Activated CD4-positive, alpha-beta T cell treated with anti-CD3 and anti-CD28 coated beads, Interleukin-2, amount 10 ng/mL, durations not matched to agents 7 days and 5 days (primary cell): ENCODE measurements at regions of chr1 and their contacts with region 1.

Region 1: GRCh38 chr1:235876402-235877097 is 9.8 kb upstream of the LYST start:
- DNase-seq: no peak
- H3K4me3 Mint-ChIP-seq: peak overlapping the region; percentile 23
- H3K27ac Mint-ChIP-seq: peak overlapping the region; percentile 83
- H3K4me1 Mint-ChIP-seq: peaks cover 66% of the 10 kb centered on the region
- H3K27me3 Mint-ChIP-seq: no peaks in the 10 kb centered on the region

Region 2: DNA sequence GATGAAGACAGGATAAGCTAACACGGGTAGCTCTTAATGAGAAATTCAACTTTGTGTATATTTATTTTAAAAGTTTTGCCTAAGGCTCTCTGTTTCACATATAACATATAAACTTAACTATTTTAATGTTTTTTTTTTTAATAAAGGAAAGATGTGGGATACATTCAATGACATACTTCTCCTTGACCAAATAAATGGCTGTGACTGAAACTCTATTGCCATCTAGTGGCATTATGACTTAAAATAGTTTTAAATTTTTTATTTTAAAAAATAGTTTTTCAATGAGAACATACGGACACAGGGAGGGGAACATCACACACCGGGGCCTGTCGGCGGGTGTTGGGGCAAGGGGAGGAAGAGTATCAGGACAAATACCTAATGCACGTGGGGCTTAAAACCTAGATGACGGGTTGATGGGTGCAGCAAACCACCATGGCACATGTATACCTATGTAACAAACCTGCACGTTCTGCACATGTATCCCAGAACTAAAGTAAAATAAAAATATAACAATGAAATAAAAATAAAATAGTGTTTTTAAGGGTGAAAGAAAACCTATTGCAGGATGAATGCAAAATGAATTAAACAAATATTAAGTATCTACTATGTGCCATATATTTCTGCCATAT is 93.3 kb before region 1 on chr1:
- CTCF ChIA-PET with region 1: no interaction called
- POLR2A ChIA-PET with region 1: no interaction called
- DNase-seq: no peak
- H3K4me3 Mint-ChIP-seq: no peak overlapping the region
- H3K27ac Mint-ChIP-seq: no peak overlapping the region
- H3K4me1 Mint-ChIP-seq: no peaks in the 10 kb centered on the region
- H3K27me3 Mint-ChIP-seq: no peaks in the 10 kb centered on the region

Region 3: DNA sequence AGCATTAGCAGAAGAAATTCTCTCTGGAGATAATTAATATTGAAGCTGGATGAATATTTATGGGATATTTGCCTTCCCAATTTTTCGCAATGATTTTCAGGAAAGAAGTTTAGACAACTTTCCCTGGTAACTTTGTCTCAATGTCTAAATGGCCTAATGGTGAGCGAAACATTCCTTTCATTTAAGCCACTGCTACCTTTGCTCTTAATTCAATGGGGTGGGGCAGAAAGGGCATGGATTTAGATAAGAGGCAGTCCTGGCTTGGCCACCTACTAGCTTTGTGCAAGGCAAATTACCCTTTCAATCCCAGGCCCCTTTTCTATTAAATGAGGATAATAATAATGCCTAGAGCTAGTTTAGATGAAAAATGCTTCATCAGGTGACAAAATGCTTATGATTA is 17.3 kb after region 1 on chr1:
- CTCF ChIA-PET with region 1: no interaction called
- POLR2A ChIA-PET with region 1: no interaction called
- DNase-seq: no peak
- H3K4me3 Mint-ChIP-seq: no peak overlapping the region
- H3K27ac Mint-ChIP-seq: no peak overlapping the region
- H3K4me1 Mint-ChIP-seq: peaks cover 10% of the 10 kb centered on the region
- H3K27me3 Mint-ChIP-seq: no peaks in the 10 kb centered on the region

Region 4: DNA sequence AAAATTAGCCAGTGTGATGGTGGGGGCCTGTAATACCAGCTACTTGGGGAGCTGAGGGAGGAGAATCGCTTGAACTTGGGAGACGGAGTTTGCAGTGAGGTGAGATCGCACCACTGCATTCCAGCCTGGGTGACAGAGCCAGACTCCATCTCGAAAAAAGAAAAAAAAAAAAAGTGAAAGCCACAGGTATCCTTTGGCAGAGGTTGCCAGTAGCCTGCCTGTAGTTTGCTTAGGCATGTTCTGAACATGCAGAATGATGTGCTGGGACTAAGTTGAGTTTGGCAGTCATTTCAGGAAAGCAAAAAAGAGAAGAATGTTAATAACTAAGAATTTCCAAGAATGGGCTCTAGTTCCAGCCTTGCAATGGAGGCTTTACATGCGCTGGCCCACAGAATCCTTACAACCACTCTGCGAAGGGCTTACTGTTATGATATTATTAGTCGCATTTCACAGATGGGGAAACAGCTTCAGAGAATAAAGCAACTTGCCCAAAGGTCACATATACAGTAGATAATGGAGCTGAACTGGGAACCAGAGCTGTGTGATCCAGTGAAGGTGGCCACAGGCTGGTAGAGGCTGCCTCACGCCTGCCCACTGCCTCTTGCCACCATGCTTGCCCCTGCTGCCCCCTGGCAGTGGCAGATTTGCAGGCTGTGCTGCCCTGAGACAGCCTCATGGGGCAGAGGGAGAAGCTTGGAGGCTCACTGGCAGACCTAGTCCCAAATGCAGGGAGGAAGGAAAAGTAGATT is 56.6 kb after region 1 on chr1:
- CTCF ChIA-PET with region 1: no interaction called
- POLR2A ChIA-PET with region 1: no interaction called
- DNase-seq: no peak
- H3K4me3 Mint-ChIP-seq: no peak overlapping the region
- H3K27ac Mint-ChIP-seq: no peak overlapping the region
- H3K4me1 Mint-ChIP-seq: peaks cover 42% of the 10 kb centered on the region
- H3K27me3 Mint-ChIP-seq: peaks cover 4% of the 10 kb centered on the region

Region 5: GRCh38 chr1:235954306-235955283 is 78.0 kb after region 1 on chr1:
- CTCF ChIA-PET with region 1: interaction called, 11 read pairs
- POLR2A ChIA-PET with region 1: no interaction called
- DNase-seq: peak; percentile 46
- H3K4me3 Mint-ChIP-seq: no peak overlapping the region
- H3K27ac Mint-ChIP-seq: peak overlapping the region; percentile 27
- H3K4me1 Mint-ChIP-seq: peaks cover 36% of the 10 kb centered on the region
- H3K27me3 Mint-ChIP-seq: no peaks in the 10 kb centered on the region